Activated B cell treated with CpG ODN at 0.5 μM for 24 hours (primary cell): ENCODE measurements at regions of chr11 and their contacts with region 1.

Region 1: DNA sequence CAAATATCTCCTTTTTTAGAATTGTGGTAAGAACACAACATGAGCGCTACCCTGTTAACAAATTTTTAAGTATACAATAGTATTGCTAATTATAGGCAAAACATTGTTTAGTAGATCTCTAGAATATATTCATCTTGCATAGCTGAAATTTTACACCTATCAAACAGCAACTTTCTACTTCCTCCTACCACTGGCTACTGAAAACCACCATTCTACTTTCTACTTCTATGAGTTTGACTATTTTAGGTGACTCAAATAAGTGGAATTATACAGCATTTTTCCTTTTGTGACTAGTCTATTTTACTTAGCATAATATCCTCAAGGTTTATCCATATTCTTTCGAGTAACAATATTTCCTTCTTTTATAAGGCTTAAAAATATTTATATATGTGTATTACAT is 128.4 kb downstream of the FAM76B start:
- DNase-seq: no peak
- ATAC-seq: no peak
- H3K4me3 Mint-ChIP-seq: no peak overlapping the region
- H3K27ac Mint-ChIP-seq: no peak overlapping the region
- H3K4me1 Mint-ChIP-seq: peaks cover 8% of the 10 kb centered on the region
- H3K27me3 Mint-ChIP-seq: peaks cover 2% of the 10 kb centered on the region
- CTCF ChIP-seq: no peak

Region 2: GRCh38 chr11:95688580-95689189 is 27.5 kb after region 1 on chr11:
- CTCF ChIA-PET with region 1: no interaction called
- POLR2A ChIA-PET with region 1: no interaction called
- intact Hi-C with region 1: no loop called
- DNase-seq: no peak
- ATAC-seq: no peak
- H3K4me3 Mint-ChIP-seq: no peak overlapping the region
- H3K27ac Mint-ChIP-seq: no peak overlapping the region
- H3K4me1 Mint-ChIP-seq: peaks cover under 1% of the 10 kb centered on the region
- H3K27me3 Mint-ChIP-seq: no peaks in the 10 kb centered on the region
- CTCF ChIP-seq: no peak

Region 3: GRCh38 chr11:95699631-95700470 is 38.7 kb after region 1 on chr11:
- CTCF ChIA-PET with region 1: no interaction called
- POLR2A ChIA-PET with region 1: no interaction called
- intact Hi-C with region 1: loop called (anchors 5 kb)
- DNase-seq: no peak
- ATAC-seq: peak; percentile 65
- H3K4me3 Mint-ChIP-seq: peak overlapping the region; percentile 66
- H3K27ac Mint-ChIP-seq: peak overlapping the region; percentile 98
- H3K4me1 Mint-ChIP-seq: peaks cover 52% of the 10 kb centered on the region
- H3K27me3 Mint-ChIP-seq: no peaks in the 10 kb centered on the region
- CTCF ChIP-seq: no peak